ENCODE measurements at regions of chr17 and their contacts with region 1.

Region 1: GRCh38 chr17:10033959-10034358 is 128.9 kb upstream of the RCVRN start:
- DNase-seq: peak in 2 of 10 donors; percentile 39 to 43
- H3K4me3 ChIP-seq: peak overlapping the region in 48 of 59 donors; percentile 4 to 74 (median 48)
- H3K27ac ChIP-seq: peak overlapping the region in 57 of 59 donors; percentile 32 to 98 (median 93)
- H3K27me3 ChIP-seq: no peaks in the 10 kb centered on the region
- CTCF ChIP-seq: no peak

Region 2: GRCh38 chr17:9937241-9937761 is 96.7 kb before region 1 on chr17:
- intact Hi-C with region 1: loop called in 1 of 2 experiments (anchors 5 kb)
- DNase-seq: peak; percentile 69 to 92 (median 75)
- H3K4me3 ChIP-seq: peak overlapping the region in 1 of 59 donors; percentile 5
- H3K27ac ChIP-seq: peak overlapping the region in 56 of 59 donors; percentile 18 to 94 (median 72)
- H3K27me3 ChIP-seq: no peaks in the 10 kb centered on the region
- CTCF ChIP-seq: peak in 3 of 56 donors; percentile 9 to 21 (median 15)

Region 3: GRCh38 chr17:9987779-9988574 is 46.0 kb before region 1 on chr17:
- intact Hi-C with region 1: loop called in 1 of 2 experiments (anchors 5 kb)
- DNase-seq: peak in 1 of 10 donors; percentile 27
- H3K4me3 ChIP-seq: no peak overlapping the region
- H3K27ac ChIP-seq: peak overlapping the region in 14 of 59 donors; percentile 4 to 76 (median 56)
- H3K27me3 ChIP-seq: no peaks in the 10 kb centered on the region
- CTCF ChIP-seq: peak; percentile 50 to 90 (median 80)

Region 4: DNA sequence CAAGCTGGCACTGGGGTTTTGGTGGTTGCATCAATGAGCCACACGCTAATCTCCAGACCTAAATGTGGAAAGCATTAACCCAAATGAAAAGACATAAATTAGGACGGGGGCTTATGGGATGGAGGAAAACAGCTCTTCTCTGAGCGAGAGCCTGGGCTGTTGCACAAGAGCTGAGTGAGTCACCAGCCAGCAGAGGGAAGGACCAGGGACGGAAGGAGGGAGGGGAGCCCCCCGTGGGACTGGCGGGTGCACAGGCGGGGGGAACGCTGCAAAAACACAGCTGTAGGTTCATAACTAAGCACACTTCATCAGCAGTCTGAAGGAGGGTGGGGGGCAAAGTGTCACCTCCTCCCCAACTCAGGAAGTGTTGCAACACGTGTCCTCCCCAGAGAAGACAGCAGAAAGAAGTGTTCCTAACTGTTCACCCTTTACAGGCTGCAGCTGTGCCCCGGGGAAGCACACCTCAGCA is 81.1 kb after region 1 on chr17:
- intact Hi-C with region 1: loop called in 1 of 2 experiments (anchors 5 kb)
- DNase-seq: peak; percentile 11 to 95 (median 81)
- H3K4me3 ChIP-seq: peak overlapping the region in 52 of 59 donors; percentile 1 to 61 (median 37)
- H3K27ac ChIP-seq: peak overlapping the region; percentile 21 to 94 (median 87)
- H3K27me3 ChIP-seq: no peaks in the 10 kb centered on the region
- CTCF ChIP-seq: peak in 15 of 56 donors; percentile 9 to 35 (median 21)

Region 5: DNA sequence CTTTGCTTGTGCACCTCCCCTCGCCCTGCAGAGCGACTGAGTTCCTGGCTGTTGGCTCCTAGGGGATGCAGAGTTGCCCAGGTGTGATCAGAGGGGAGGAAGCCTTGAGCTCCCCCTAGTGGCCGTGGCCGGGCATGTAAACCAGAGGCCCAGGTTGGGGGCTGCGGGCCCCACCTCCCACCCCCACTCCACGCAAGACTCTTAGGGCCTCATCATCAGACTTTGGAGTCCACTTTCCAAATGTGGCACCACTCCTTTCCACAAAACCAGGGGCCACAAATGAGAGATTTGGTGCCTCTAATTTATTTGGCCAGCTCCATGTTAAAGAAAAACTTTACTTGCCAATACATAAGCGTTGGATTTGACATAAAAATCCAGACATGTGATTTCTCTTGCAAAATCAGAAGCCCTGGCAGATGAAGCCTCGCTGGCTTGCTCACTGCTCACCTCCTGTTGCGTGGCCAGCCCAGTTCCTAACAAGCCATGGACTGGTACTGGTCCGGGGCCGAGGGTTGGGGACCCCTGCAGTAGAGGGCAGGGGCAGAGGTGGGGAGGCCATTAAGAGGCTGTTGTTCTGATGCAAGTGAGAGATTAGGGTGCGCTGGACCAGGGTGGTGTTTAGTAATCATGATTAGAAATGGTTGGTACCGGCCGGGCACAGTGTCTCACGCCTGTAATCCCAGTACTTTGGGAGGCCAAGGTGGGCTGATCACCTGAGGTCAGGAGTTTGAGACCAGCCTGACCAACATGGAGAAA is 193.1 kb after region 1 on chr17:
- intact Hi-C with region 1: loop called in 1 of 2 experiments (anchors 10 kb)
- DNase-seq: peak in 8 of 10 donors; percentile 46 to 68 (median 50)
- H3K4me3 ChIP-seq: no peak overlapping the region
- H3K27ac ChIP-seq: peak overlapping the region in 3 of 59 donors; percentile 3 to 84 (median 18)
- H3K27me3 ChIP-seq: no peaks in the 10 kb centered on the region
- CTCF ChIP-seq: peak; percentile 47 to 95 (median 83)